ENCODE measurements at regions of chr18 and their contacts with region 1.

Region 1: DNA sequence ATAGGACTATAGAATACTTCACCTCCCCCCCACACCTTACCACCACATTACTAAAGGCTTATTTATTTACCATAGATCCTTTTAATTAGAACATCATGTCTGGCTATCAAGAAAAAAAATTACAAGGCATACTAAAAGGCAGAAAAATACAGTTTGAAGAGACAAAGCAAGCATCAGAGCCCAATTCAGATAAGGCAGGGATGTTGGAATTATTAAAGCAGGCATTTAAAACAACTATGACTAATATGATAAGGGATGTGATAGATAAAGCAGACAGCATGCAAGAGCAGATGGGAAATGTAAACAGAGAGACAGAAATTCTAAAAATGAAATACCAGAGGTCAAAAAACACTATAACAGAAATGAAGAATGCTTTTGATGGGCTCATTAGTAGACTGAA is 55.4 kb upstream of the SMIM21 start:
- DNase-seq: no peak
- H3K4me3 ChIP-seq: no peak overlapping the region
- H3K27ac ChIP-seq: no peak overlapping the region
- H3K4me1 ChIP-seq: no peaks in the 10 kb centered on the region
- H3K27me3 ChIP-seq: peaks cover 0 to 5% (median 0%) of the 10 kb centered on the region in 7 donors
- CTCF ChIP-seq: no peak
- POLR2A ChIP-seq: no peak

Region 2: DNA sequence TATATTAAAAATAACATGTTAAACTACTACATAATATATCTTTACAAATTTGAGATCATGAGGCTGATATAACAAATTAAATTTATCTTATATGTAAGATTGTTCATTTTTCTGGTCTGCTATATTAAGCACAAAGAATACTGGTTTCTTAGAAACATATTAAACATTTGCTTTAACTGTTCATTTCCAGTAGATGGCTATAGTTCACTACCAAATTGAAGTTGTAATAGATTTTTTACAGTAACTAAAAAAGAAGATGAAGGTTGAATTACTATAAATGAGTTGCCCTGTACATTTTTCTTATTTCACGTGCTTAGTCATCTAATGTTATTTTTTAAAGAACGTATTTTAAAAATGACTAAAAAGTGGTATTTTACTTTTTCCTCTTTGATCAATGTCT is 828.2 kb before region 1 on chr18:
- intact Hi-C with region 1: loop called (anchors 5 kb)
- DNase-seq: no peak
- H3K4me3 ChIP-seq: no peak overlapping the region
- H3K27ac ChIP-seq: no peak overlapping the region
- H3K4me1 ChIP-seq: peaks cover 0 to 11% (median 4%) of the 10 kb centered on the region in 6 donors
- H3K27me3 ChIP-seq: no peaks in the 10 kb centered on the region
- CTCF ChIP-seq: peak in 1 of 11 experiments; percentile 13
- POLR2A ChIP-seq: no peak

Measured in spleen (tissue), 13 donors.